ENCODE measurements at regions of chr5 and their contacts with region 1.

Region 1: DNA sequence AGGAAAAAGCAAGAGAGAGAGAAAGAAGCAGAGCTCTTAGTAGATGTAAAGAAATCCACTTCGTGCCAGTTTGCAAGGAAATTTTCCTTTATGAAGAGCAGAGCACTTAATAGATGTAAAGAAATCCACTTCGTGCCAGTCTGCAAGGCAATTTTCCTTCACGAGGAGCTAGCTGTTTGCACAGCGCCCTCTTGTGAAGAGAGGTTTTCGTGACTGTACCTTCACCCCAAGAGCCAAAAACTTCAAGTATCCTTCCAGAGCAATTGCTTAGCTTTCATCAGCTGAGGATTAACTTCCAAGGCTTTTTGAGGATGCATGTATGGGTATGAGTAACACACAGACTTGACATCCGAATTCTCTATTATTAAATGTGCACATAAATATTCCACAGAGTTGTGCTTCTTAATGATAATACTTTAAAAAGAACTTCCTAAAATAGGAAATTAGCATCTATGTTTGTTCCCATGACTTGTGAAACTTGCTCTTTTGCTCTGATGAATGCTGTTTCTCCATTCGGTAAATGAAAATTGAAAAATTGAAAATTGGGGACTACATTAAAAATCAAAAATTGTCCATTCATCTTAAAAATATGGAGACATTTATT is 525.6 kb downstream of the PDE4D start:
- DNase-seq: peak; percentile 75
- H3K4me3 ChIP-seq: no peak overlapping the region
- H3K27ac ChIP-seq: no peak overlapping the region
- H3K4me1 ChIP-seq: no peaks in the 10 kb centered on the region
- H3K27me3 ChIP-seq: peaks cover 0 to 2% of the 10 kb centered on the region in 2 experiments
- CTCF ChIP-seq: peak; percentile 75 to 79
- POLR2A ChIP-seq: no peak

Region 2: GRCh38 chr5:58530942-58531490 is 836.9 kb before region 1 on chr5:
- CTCF ChIA-PET with region 1: no interaction called
- POLR2A ChIA-PET with region 1: no interaction called
- dilution Hi-C with region 1: no loop called
- intact Hi-C with region 1: no loop called
- DNase-seq: no peak
- H3K4me3 ChIP-seq: no peak overlapping the region
- H3K27ac ChIP-seq: no peak overlapping the region
- H3K4me1 ChIP-seq: no peaks in the 10 kb centered on the region
- H3K27me3 ChIP-seq: peaks cover 10 to 14% of the 10 kb centered on the region in 2 experiments
- CTCF ChIP-seq: no peak
- POLR2A ChIP-seq: no peak

Region 3: GRCh38 chr5:59193616-59194319 is 174.1 kb before region 1 on chr5:
- CTCF ChIA-PET with region 1: interaction called, 193 read pairs
- POLR2A ChIA-PET with region 1: no interaction called
- dilution Hi-C with region 1: no loop called
- intact Hi-C with region 1: loop called (anchors 1 kb)
- DNase-seq: no peak
- H3K4me3 ChIP-seq: no peak overlapping the region
- H3K27ac ChIP-seq: no peak overlapping the region
- H3K4me1 ChIP-seq: peaks cover 2% of the 10 kb centered on the region
- H3K27me3 ChIP-seq: no peaks in the 10 kb centered on the region
- CTCF ChIP-seq: no peak
- POLR2A ChIP-seq: no peak

Region 4: GRCh38 chr5:59212596-59212995 is 155.3 kb before region 1 on chr5:
- CTCF ChIA-PET with region 1: interaction called, 40 read pairs
- POLR2A ChIA-PET with region 1: no interaction called
- dilution Hi-C with region 1: no loop called
- intact Hi-C with region 1: no loop called
- DNase-seq: no peak
- H3K4me3 ChIP-seq: no peak overlapping the region
- H3K27ac ChIP-seq: no peak overlapping the region
- H3K4me1 ChIP-seq: no peaks in the 10 kb centered on the region
- H3K27me3 ChIP-seq: no peaks in the 10 kb centered on the region
- CTCF ChIP-seq: no peak
- POLR2A ChIP-seq: no peak

Region 5: GRCh38 chr5:59238126-59238902 is 129.6 kb before region 1 on chr5:
- CTCF ChIA-PET with region 1: interaction called, 14 read pairs
- POLR2A ChIA-PET with region 1: no interaction called
- dilution Hi-C with region 1: no loop called
- intact Hi-C with region 1: no loop called
- DNase-seq: no peak
- H3K4me3 ChIP-seq: no peak overlapping the region
- H3K27ac ChIP-seq: no peak overlapping the region
- H3K4me1 ChIP-seq: peaks cover 25% of the 10 kb centered on the region
- H3K27me3 ChIP-seq: no peaks in the 10 kb centered on the region
- CTCF ChIP-seq: no peak
- POLR2A ChIP-seq: no peak

Region 6: DNA sequence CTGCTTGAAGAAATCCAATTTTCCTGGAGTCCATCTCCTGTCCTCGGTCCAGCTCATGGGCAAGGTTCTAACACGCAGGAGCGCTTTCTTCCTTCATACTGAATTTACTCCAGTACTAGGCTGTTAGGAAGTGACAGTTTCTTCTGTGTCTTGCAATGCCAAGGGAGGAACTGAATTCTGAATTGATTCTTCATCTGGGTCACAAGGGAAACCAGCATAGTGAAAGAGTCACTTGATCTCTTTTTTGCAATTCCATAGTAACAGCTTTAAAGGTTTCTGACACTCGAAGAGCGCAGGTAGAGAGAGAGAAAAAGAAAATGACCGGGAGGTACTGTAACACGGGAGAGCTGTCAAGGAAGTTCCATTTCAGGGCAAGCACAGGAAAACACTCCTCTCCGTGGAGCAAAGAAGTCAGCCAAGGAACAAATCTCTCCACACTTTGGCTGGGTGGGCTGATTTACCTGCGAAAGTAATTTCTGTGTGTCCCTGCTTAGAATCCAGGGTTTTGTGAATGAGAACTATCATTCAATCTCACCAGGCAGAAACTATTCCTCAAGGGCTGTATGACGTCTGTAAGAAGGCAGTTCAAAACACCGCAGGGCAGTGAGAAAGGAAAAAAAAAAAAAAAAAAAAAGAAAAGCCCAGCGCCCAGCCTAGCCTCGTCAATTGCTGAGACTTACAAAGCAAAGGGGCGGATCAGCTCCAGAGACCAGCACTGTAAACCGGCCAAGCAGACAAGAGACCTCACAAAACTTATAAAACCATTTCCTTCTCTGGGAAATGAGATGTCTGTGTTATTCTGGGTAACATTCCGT is 92.2 kb before region 1 on chr5:
- CTCF ChIA-PET with region 1: interaction called, 17 read pairs
- POLR2A ChIA-PET with region 1: no interaction called
- dilution Hi-C with region 1: no loop called
- intact Hi-C with region 1: loop called (anchors 1 kb)
- DNase-seq: peak; percentile 85
- H3K4me3 ChIP-seq: peak overlapping the region; percentile 34 to 97 (median 52)
- H3K27ac ChIP-seq: peak overlapping the region; percentile 90
- H3K4me1 ChIP-seq: peaks cover 25% of the 10 kb centered on the region
- H3K27me3 ChIP-seq: no peaks in the 10 kb centered on the region
- CTCF ChIP-seq: no peak
- POLR2A ChIP-seq: peak; percentile 5

Region 7: GRCh38 chr5:59335544-59335943 is 32.3 kb before region 1 on chr5:
- CTCF ChIA-PET with region 1: interaction called, 18 read pairs
- POLR2A ChIA-PET with region 1: no interaction called
- dilution Hi-C with region 1: no loop called
- intact Hi-C with region 1: no loop called
- DNase-seq: no peak
- H3K4me3 ChIP-seq: no peak overlapping the region
- H3K27ac ChIP-seq: no peak overlapping the region
- H3K4me1 ChIP-seq: no peaks in the 10 kb centered on the region
- H3K27me3 ChIP-seq: no peaks in the 10 kb centered on the region
- CTCF ChIP-seq: no peak
- POLR2A ChIP-seq: no peak

Region 8: DNA sequence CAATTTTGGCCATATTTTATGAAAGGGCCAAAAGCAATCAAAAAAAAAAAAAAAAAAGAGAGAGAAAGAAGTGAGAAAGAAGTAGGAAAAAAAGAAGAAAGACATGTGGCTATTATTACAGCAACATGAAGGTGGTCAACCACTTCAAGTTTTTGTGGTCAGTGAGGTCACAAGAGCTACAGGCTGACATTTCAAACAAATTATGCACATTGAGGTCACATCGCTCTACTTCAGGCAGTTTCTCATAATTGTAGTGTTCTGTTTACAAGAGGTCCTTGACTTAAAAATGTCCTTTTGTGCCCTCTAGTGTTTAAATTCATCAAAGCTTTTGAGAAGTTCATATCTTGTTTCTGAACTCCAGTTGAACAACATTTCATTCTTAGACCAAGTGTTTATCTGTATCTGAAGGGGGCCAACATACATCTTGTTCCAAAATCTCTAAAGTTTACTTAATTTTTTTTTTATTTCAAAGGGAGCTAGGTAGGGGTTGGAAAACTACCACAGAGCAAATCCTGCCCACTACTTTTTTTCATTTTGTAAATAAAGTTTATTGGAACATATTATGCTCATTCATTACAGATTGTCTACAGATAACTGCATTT is 12.6 kb after region 1 on chr5:
- CTCF ChIA-PET with region 1: interaction called, 37 read pairs
- POLR2A ChIA-PET with region 1: no interaction called
- dilution Hi-C with region 1: no loop called
- intact Hi-C with region 1: no loop called
- DNase-seq: peak; percentile 71
- H3K4me3 ChIP-seq: no peak overlapping the region
- H3K27ac ChIP-seq: no peak overlapping the region
- H3K4me1 ChIP-seq: no peaks in the 10 kb centered on the region
- H3K27me3 ChIP-seq: no peaks in the 10 kb centered on the region
- CTCF ChIP-seq: peak; percentile 20 to 26
- POLR2A ChIP-seq: no peak

Region 9: GRCh38 chr5:59416451-59416850 is 48.6 kb after region 1 on chr5:
- CTCF ChIA-PET with region 1: no interaction called
- POLR2A ChIA-PET with region 1: no interaction called
- dilution Hi-C with region 1: no loop called
- intact Hi-C with region 1: no loop called
- DNase-seq: no peak
- H3K4me3 ChIP-seq: no peak overlapping the region
- H3K27ac ChIP-seq: no peak overlapping the region
- H3K4me1 ChIP-seq: no peaks in the 10 kb centered on the region
- H3K27me3 ChIP-seq: no peaks in the 10 kb centered on the region
- CTCF ChIP-seq: no peak
- POLR2A ChIP-seq: no peak

Measured in endothelial cell of umbilical vein (primary cell).